Motor neuron (in vitro differentiated cells): ENCODE measurements at regions of chr4 and their contacts with region 1.

Region 1: DNA sequence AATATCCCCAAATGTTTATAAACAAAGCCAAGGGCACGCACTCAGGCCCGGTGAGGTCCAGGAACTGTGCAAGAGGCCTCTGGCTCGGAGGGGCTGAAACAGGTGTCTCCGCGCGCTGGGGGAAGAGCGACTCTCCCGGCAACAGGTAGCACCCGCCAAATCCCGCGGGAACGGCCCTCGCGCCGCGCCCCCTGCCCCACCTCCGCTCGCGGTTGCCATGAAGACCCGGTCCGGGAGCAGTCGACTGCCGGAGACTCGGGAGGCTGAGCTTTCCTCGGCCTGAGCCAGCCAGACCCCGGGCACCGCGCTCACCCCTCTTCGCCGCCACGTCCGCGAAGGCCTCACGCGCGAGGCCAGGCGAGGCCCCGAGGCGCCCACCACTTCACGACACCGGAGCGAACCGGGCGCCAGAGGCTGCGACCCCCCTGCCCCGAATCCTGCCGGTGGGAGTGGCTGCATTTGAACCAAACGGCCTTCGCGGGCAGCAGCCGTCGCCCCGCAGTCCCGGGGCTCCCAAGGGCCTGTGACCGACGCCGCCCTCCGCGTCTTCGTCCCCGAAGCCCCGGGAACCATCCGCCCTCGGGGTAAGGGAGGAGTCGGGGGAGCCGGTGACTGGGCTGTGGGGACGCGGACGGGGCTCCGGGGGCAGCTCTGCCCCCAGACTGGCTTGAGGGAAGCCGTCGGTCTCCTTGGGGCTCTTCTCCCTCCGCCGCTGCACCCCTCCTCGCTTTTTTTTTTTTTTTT is at the start of gene NSUN7:
- ATAC-seq: peak in 7 of 8 experiments; percentile 36 to 93 (median 91)
- H3K4me3 ChIP-seq: peak within 1 kb of the TSS; percentile 30 to 54 (median 52)
- H3K27ac ChIP-seq: peak within 1 kb of the TSS in 1 of 2 donors; percentile 32
- H3K4me1 ChIP-seq: no peaks in the 10 kb centered on the region
- total RNA-seq, gene NSUN7: 0.15 to 3.2 (median 2.0) TPM in 7 of 8 experiments, not detected in the other

Region 2: GRCh38 chr4:40897557-40898203 is 147.8 kb after region 1 on chr4:
- in situ Hi-C with region 1: loop called in 4 of 9 experiments (anchors 25 kb)
- ATAC-seq: peak in 6 of 8 experiments; percentile 36 to 87 (median 71)
- H3K4me3 ChIP-seq: no peak overlapping the region
- H3K27ac ChIP-seq: no peak overlapping the region
- H3K4me1 ChIP-seq: no peaks in the 10 kb centered on the region

Region 3: DNA sequence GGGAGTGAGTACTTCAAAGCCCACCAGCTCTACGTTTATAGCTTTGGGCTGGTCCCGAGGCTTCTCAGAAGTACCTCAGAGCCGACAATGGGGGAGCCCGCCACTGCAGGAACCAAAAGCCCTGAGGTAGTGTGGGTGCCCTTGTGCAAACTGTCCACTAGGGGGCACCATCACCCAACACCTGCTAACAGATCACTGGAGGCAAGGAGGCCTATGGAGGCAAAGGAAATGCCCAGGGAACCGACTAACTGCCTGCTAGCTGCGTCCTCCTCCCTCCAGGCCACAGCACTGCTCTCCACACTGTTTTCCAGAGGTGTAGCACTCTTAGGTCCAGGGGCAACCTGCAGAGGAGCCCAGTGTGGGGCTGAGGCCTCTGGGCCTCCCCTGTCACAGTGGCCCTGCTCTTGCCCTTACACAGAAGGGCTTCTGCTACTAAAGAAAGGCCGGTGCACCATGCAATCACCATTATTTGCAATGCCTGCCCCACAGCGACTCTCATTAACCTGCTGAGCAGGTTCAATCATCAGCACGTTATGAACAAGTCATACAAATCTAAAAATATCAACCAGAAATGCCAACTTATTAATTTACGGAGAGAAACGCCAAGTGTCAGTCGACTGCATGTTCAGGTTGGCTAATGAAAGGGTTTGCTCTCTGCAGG is 158.9 kb after region 1 on chr4:
- in situ Hi-C with region 1: loop called in 2 of 9 experiments (anchors 25 kb)
- ATAC-seq: peak; percentile 43 to 91 (median 56)
- H3K4me3 ChIP-seq: no peak overlapping the region
- H3K27ac ChIP-seq: no peak overlapping the region
- H3K4me1 ChIP-seq: peaks cover 0 to 18% of the 10 kb centered on the region in 2 donors